ENCODE measurements at regions of chr20 and their contacts with region 1.

Region 1: GRCh38 chr20:35303735-35304491 is 11.7 kb upstream of the FAM83C start:
- DNase-seq: peak; percentile 94
- ATAC-seq: peak; percentile 84
- H3K4me3 Mint-ChIP-seq: peak overlapping the region; percentile 21; the same call in 1 of the 2 replicates
- H3K27ac Mint-ChIP-seq: no peak overlapping the region
- H3K4me1 Mint-ChIP-seq: peaks cover 14% of the 10 kb centered on the region
- H3K27me3 Mint-ChIP-seq: peaks cover under 1% of the 10 kb centered on the region; the same call in 1 of the 2 replicates
- CTCF ChIP-seq: peak; percentile 89

Region 2: GRCh38 chr20:35235881-35236280 is 68.0 kb before region 1 on chr20:
- CTCF ChIA-PET with region 1: no interaction called
- POLR2A ChIA-PET with region 1: no interaction called
- DNase-seq: no peak
- ATAC-seq: no peak
- H3K4me3 Mint-ChIP-seq: no peak overlapping the region
- H3K27ac Mint-ChIP-seq: no peak overlapping the region
- H3K4me1 Mint-ChIP-seq: peaks cover 12% of the 10 kb centered on the region
- H3K27me3 Mint-ChIP-seq: peaks cover 4% of the 10 kb centered on the region
- CTCF ChIP-seq: no peak

Region 3: GRCh38 chr20:35284267-35284991 is 19.5 kb before region 1 on chr20 and contains the start of gene EIF6:
- CTCF ChIA-PET with region 1: interaction called, 36 read pairs
- POLR2A ChIA-PET with region 1: interaction called, 8 read pairs
- DNase-seq: peak; percentile 89
- ATAC-seq: peak; percentile 91
- H3K4me3 Mint-ChIP-seq: peak within 1 kb of the TSS; percentile 94
- H3K27ac Mint-ChIP-seq: peak within 1 kb of the TSS; percentile 84
- H3K4me1 Mint-ChIP-seq: peaks cover 18% of the 10 kb centered on the region
- H3K27me3 Mint-ChIP-seq: no peaks in the 10 kb centered on the region; the same call in 1 of the 2 replicates
- CTCF ChIP-seq: no peak
- total RNA-seq, gene EIF6: 130 to 157 TPM (median 133 TPM) in 3 replicates

Region 4: GRCh38 chr20:35318502-35319157 is 14.7 kb after region 1 on chr20:
- CTCF ChIA-PET with region 1: interaction called, 19 read pairs
- POLR2A ChIA-PET with region 1: no interaction called
- DNase-seq: no peak
- ATAC-seq: no peak; the same call in 1 of the 2 replicates
- H3K4me3 Mint-ChIP-seq: no peak overlapping the region
- H3K27ac Mint-ChIP-seq: 0 out of 2 replicates have a peak overlapping the region, but pooled peaks have one; percentile 33
- H3K4me1 Mint-ChIP-seq: peaks cover 18% of the 10 kb centered on the region
- H3K27me3 Mint-ChIP-seq: no peaks in the 10 kb centered on the region
- CTCF ChIP-seq: no peak

Region 5: GRCh38 chr20:35353646-35354045 is 49.7 kb after region 1 on chr20:
- CTCF ChIA-PET with region 1: no interaction called
- POLR2A ChIA-PET with region 1: no interaction called
- DNase-seq: no peak
- ATAC-seq: no peak
- H3K4me3 Mint-ChIP-seq: no peak overlapping the region
- H3K27ac Mint-ChIP-seq: no peak overlapping the region
- H3K4me1 Mint-ChIP-seq: no peaks in the 10 kb centered on the region
- H3K27me3 Mint-ChIP-seq: no peaks in the 10 kb centered on the region
- CTCF ChIP-seq: no peak

Region 6: DNA sequence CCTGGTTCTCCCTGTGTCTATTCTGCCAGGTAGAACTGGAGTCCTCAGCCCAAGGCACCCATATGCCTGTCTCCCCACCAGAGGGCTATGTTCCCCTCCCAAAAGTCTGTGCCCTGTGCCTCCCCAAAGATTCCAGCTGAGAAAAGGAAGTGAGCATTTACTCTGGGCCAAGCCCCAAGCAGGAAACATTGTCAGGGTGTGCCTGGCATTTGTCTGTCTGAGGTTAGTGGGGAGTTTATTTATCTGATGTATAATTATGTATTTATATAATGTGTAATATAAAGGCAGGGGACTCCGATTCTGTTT is 128.5 kb after region 1 on chr20:
- CTCF ChIA-PET with region 1: interaction called, 14 read pairs
- POLR2A ChIA-PET with region 1: no interaction called
- DNase-seq: no peak
- ATAC-seq: peak; percentile 60
- H3K4me3 Mint-ChIP-seq: no peak overlapping the region
- H3K27ac Mint-ChIP-seq: no peak overlapping the region; the same call in 1 of the 2 replicates
- H3K4me1 Mint-ChIP-seq: peaks cover 30% of the 10 kb centered on the region
- H3K27me3 Mint-ChIP-seq: no peaks in the 10 kb centered on the region; the same call in 1 of the 2 replicates
- CTCF ChIP-seq: no peak

Region 7: GRCh38 chr20:35447082-35447789 is 143.3 kb after region 1 on chr20:
- CTCF ChIA-PET with region 1: interaction called, 26 read pairs
- POLR2A ChIA-PET with region 1: no interaction called
- DNase-seq: peak; percentile 96
- ATAC-seq: peak; percentile 88
- H3K4me3 Mint-ChIP-seq: peak overlapping the region; percentile 80
- H3K27ac Mint-ChIP-seq: no peak overlapping the region
- H3K4me1 Mint-ChIP-seq: peaks cover 12% of the 10 kb centered on the region
- H3K27me3 Mint-ChIP-seq: no peaks in the 10 kb centered on the region
- CTCF ChIP-seq: peak; percentile 95

Region 8: GRCh38 chr20:35454881-35455609 is 151.1 kb after region 1 on chr20 and contains the start of gene CEP250:
- CTCF ChIA-PET with region 1: interaction called, 11 read pairs
- POLR2A ChIA-PET with region 1: no interaction called
- DNase-seq: peak; percentile 97
- ATAC-seq: peak; percentile 92
- H3K4me3 Mint-ChIP-seq: peak within 1 kb of the TSS; percentile 90
- H3K27ac Mint-ChIP-seq: peak within 1 kb of the TSS; percentile 99
- H3K4me1 Mint-ChIP-seq: peaks cover 32% of the 10 kb centered on the region
- H3K27me3 Mint-ChIP-seq: no peaks in the 10 kb centered on the region
- CTCF ChIP-seq: no peak
- total RNA-seq, gene CEP250: 63.1 to 66.9 TPM (median 65.8 TPM) in 3 replicates

Region 9: GRCh38 chr20:35657271-35657670 is 353.4 kb after region 1 on chr20:
- CTCF ChIA-PET with region 1: no interaction called
- POLR2A ChIA-PET with region 1: no interaction called
- DNase-seq: no peak
- ATAC-seq: no peak
- H3K4me3 Mint-ChIP-seq: no peak overlapping the region
- H3K27ac Mint-ChIP-seq: peak overlapping the region; percentile 71; the same call in 1 of the 2 replicates
- H3K4me1 Mint-ChIP-seq: peaks cover 39% of the 10 kb centered on the region
- H3K27me3 Mint-ChIP-seq: no peaks in the 10 kb centered on the region
- CTCF ChIP-seq: no peak

Measured in WTC11 (cell line).